Sciatic nerve (tissue), 2 donors: ENCODE measurements at regions of chr3 and their contacts with region 1.

Region 1: DNA sequence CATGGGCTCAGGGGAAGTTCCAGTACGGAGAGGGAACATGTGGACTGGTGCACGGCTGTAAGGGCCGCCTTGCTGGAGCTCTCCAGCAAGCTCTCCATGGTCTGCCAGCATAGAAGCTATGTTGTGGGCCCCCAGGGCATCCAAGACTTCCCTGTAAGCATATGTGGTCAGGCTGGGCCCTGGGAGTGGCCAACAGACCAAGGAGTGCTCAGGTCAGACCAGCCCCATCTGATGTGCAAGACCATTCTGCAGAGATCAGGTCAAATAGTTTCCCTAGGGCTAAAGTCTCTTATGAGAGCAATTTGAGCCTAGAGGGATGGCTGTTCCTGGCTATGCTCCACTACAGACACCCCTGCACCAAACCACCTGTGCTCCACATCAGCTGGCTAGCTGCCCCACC is 110.1 kb upstream of the DAZL start:
- DNase-seq: no peak
- ATAC-seq: no peak

Region 2: DNA sequence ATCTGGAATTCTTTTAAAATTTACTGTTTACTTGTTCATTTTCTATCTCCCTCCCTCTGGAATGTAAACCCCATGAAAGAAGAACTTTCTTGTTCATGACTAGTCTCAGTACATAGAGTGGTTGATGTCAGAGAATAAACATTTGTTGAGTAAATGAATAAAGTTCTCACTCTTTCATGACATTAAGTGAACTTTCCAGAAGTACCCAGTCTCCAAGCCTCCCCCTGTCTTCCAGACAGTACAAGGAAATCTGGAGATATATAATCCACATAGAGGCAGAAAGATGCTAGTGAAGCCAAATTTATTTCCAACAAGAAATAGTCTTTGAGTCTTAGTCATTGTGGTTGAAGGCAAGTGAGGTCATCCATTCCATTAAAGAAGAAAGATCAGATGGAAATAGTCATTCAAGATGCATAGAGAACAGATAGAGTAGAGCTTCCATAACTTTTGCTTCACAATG is 612.4 kb before region 1 on chr3:
- intact Hi-C with region 1: loop called (anchors 5 kb)
- DNase-seq: no peak
- ATAC-seq: peak; percentile 54